Heart right ventricle (tissue), 16 donors: ENCODE measurements at regions of chr12 and their contacts with region 1.

Region 1: DNA sequence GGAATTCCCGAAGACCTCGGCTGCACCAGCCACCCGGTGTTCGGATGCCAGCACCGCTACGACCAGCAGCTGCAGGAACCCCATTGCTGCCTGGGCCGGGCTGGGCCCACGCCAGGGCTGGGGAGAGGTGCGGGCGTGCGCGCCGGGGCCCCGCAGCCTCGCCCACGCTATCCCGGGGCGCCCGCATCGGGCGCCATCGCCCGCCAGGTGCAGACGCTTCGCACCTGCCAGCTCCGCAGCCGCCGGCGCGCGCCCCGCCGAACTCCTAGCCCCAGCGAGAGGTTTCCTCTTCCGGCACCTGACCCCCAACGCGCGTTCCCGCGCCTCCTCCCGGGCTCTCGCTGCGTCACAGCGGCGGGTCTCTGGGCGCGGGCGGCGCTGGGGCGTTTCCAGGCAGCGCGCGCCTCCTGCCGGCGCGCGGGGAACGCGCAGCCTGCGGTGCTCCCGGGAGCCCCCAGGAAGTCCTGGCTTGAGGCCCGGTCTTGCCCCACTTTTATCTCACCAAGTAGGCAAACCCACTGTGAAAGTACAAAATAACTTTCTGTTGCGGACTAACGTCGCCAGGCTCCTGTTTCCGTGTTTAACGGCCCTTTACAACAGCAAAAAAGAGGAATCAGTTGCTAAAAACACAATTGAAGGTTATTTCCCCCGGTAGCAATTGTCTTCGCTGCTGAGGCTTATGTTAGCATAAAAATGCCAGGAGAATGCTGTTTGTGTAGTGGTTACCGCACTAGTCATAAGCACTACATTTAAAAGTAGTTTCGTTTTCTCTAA is at the start of gene TM7SF3:
- DNase-seq: peak; percentile 94
- ATAC-seq: peak; percentile 93 to 99 (median 96)
- H3K4me3 ChIP-seq: peak within 1 kb of the TSS; percentile 60 to 98 (median 79)
- H3K27ac ChIP-seq: peak within 1 kb of the TSS; percentile 73 to 95 (median 92)
- H3K4me1 ChIP-seq: peaks cover 0 to 54% (median 39%) of the 10 kb centered on the region in 9 donors
- H3K27me3 ChIP-seq: no peaks in the 10 kb centered on the region
- CTCF ChIP-seq: peak; percentile 92 to 99 (median 98)
- total RNA-seq, gene TM7SF3: 16.3 to 29.3 (median 23.7) TPM

Region 2: GRCh38 chr12:26853303-26854030 is 160.8 kb before region 1 on chr12:
- intact Hi-C with region 1: loop called in 6 of 10 experiments (anchors 5 to 10 kb)
- DNase-seq: peak; percentile 61 to 65
- ATAC-seq: peak in 7 of 8 donors; percentile 73 to 87 (median 81)
- H3K4me3 ChIP-seq: no peak overlapping the region
- H3K27ac ChIP-seq: no peak overlapping the region
- H3K4me1 ChIP-seq: peaks cover 0 to 25% (median 11%) of the 10 kb centered on the region in 9 donors
- H3K27me3 ChIP-seq: no peaks in the 10 kb centered on the region
- CTCF ChIP-seq: peak; percentile 76 to 92 (median 88)

Region 3: GRCh38 chr12:27094726-27095125 is 80.5 kb after region 1 on chr12:
- intact Hi-C with region 1: no loop called
- DNase-seq: no peak
- ATAC-seq: no peak
- H3K4me3 ChIP-seq: no peak overlapping the region
- H3K27ac ChIP-seq: no peak overlapping the region
- H3K4me1 ChIP-seq: no peaks in the 10 kb centered on the region
- H3K27me3 ChIP-seq: no peaks in the 10 kb centered on the region
- CTCF ChIP-seq: no peak

Region 4: GRCh38 chr12:27179400-27180214 is 165.3 kb after region 1 on chr12:
- intact Hi-C with region 1: no loop called
- DNase-seq: peak in 1 of 2 donors; percentile 44
- ATAC-seq: peak; percentile 86 to 96 (median 91)
- H3K4me3 ChIP-seq: no peak overlapping the region
- H3K27ac ChIP-seq: peak overlapping the region; percentile 42 to 87 (median 68)
- H3K4me1 ChIP-seq: peaks cover 4 to 52% (median 23%) of the 10 kb centered on the region in 9 donors
- H3K27me3 ChIP-seq: no peaks in the 10 kb centered on the region
- CTCF ChIP-seq: no peak